Breast epithelium (tissue), 4 donors: ENCODE measurements at regions of chr3 and their contacts with region 1.

Region 1: DNA sequence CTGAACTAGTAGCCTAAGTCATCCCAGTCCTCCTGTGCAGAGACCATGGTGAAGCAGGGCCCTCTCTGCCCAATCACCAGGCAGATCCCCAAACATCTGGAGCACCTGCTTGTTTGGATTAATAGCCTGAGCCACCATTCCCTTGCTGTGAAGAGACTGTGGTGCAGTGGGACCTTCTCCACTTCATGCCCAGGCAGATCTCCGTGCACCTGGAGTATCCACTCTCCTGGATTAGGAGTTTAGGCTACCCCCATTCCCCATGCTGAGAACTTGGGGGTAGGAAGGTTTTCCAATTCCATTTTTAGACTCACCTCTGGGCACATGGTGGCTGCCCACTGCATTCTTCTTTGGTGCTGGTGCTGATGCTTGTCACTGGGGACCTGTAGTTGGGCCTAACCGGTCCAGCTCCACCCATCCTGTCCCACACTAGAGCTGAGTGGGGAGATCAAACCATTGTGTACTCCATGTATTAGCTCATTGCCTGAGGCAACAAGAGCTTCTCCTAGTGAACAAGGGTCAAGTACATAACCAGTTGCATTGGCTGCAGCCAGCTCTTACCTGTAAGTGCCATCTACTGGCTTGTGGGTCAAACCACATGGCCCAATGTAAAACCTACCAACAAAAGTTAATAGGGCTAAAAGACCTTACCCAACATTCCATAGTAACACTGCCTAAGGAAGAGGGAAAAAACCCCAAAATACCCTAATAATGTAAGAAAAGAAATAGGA is 382.5 kb upstream of the CBLB start:
- DNase-seq: no peak
- H3K4me3 ChIP-seq: no peak overlapping the region
- H3K27ac ChIP-seq: no peak overlapping the region
- H3K4me1 ChIP-seq: no peaks in the 10 kb centered on the region
- H3K27me3 ChIP-seq: no peaks in the 10 kb centered on the region
- CTCF ChIP-seq: no peak
- POLR2A ChIP-seq: no peak

Region 2: DNA sequence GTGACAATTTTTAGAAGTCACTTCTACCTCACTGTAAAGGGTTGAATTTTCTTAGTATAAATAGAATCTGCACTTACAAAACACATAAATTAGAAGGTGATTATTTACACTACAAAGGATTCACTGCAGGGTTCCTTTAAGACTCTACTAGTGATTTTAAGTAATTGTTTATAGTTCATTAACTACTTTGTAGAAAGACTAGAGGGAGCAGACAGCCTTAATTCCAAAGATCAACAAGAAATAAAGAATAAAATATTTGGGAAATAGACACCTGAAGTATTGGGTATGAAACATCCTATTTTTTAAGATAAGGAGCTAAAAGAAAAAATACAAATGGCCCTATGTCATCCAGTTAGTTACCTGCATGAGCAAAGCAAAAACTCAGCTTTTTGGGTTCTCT is 1245.2 kb before region 1 on chr3:
- intact Hi-C with region 1: no loop called
- DNase-seq: no peak
- H3K4me3 ChIP-seq: no peak overlapping the region
- H3K27ac ChIP-seq: no peak overlapping the region
- H3K4me1 ChIP-seq: no peaks in the 10 kb centered on the region
- H3K27me3 ChIP-seq: no peaks in the 10 kb centered on the region
- CTCF ChIP-seq: no peak
- POLR2A ChIP-seq: no peak

Region 3: DNA sequence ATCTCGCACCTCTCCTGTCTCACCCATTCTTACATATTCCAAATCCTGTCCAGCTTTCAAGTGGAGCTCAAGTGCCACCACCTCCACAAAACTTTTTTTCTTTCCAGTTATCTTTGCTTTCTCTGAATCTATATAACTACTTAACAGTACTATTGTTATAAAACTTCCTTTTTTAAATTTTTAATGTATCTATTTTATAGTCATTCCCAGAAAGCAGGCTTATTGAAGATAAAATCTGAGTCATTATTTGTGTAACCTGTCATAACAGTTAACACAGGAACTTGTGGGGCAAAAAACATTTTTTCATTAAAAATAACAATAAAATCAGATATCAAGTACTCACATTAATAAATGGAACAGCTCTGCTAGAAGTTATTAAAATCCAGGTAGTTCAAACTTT is 957.9 kb before region 1 on chr3:
- intact Hi-C with region 1: no loop called
- DNase-seq: no peak
- H3K4me3 ChIP-seq: no peak overlapping the region
- H3K27ac ChIP-seq: no peak overlapping the region
- H3K4me1 ChIP-seq: no peaks in the 10 kb centered on the region
- H3K27me3 ChIP-seq: no peaks in the 10 kb centered on the region
- CTCF ChIP-seq: no peak
- POLR2A ChIP-seq: no peak

Region 4: GRCh38 chr3:105555206-105555605 is 696.1 kb before region 1 on chr3:
- intact Hi-C with region 1: loop called (anchors 5 kb)
- DNase-seq: no peak
- H3K4me3 ChIP-seq: no peak overlapping the region
- H3K27ac ChIP-seq: no peak overlapping the region
- H3K4me1 ChIP-seq: no peaks in the 10 kb centered on the region
- H3K27me3 ChIP-seq: no peaks in the 10 kb centered on the region
- CTCF ChIP-seq: no peak
- POLR2A ChIP-seq: no peak